Psoas muscle (tissue), 8 donors: ENCODE measurements at regions of chr2 and their contacts with region 1.

Region 1: GRCh38 chr2:44126106-44126797 is 42.4 kb upstream of the PPM1B start:
- DNase-seq: peak in 1 of 2 donors; percentile 21
- ATAC-seq: peak; percentile 84 to 90 (median 88)
- H3K4me3 ChIP-seq: no peak overlapping the region
- H3K27ac ChIP-seq: peak overlapping the region; percentile 84
- H3K4me1 ChIP-seq: peaks cover 28% of the 10 kb centered on the region
- H3K27me3 ChIP-seq: no peaks in the 10 kb centered on the region
- CTCF ChIP-seq: no peak

Region 2: GRCh38 chr2:44167940-44168680 is 41.9 kb after region 1 on chr2:
- intact Hi-C with region 1: loop called (anchors 2 kb)
- DNase-seq: peak; percentile 97 to 99
- ATAC-seq: peak; percentile 81 to 89 (median 84)
- H3K4me3 ChIP-seq: peak overlapping the region; percentile 71
- H3K27ac ChIP-seq: peak overlapping the region; percentile 96
- H3K4me1 ChIP-seq: peaks cover 14% of the 10 kb centered on the region
- H3K27me3 ChIP-seq: no peaks in the 10 kb centered on the region
- CTCF ChIP-seq: no peak